CD14-positive monocyte (primary cell): ENCODE measurements at regions of chr11 and their contacts with region 1.

Region 1: DNA sequence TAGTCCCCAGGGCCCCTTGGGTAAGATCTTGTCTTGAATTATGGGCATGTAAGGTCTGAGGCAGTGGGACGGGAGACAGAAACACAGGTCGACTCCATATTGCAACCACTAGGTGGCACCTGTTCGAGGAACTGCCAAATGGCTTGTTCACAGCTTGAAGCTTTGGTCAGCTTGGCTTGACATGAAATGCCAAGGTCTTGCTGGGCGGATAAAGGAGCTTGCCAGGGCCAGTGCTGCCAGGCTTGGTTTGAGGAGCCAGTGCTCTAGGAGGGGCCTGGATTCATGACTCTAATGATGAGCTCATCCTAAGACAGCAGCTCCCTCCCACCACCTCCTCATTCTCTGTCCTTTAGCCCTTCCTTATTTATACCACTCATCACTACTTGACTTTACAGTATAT is 11.9 kb upstream of the NRIP3 start:
- DNase-seq: peak; percentile 67 to 82 (median 80)
- H3K4me3 ChIP-seq: no peak overlapping the region
- H3K4me3 Mint-ChIP-seq: no peak overlapping the region
- H3K27ac ChIP-seq: no peak overlapping the region
- H3K27ac Mint-ChIP-seq: peak overlapping the region in 1 of 7 donors; percentile 45
- H3K4me1 ChIP-seq: peaks cover 19 to 20% of the 10 kb centered on the region in 2 donors
- H3K4me1 Mint-ChIP-seq: peaks cover 23% of the 10 kb centered on the region
- H3K27me3 ChIP-seq: no peaks in the 10 kb centered on the region
- H3K27me3 Mint-ChIP-seq: peaks cover 3 to 6% (median 4%) of the 10 kb centered on the region in 3 donors
- CTCF ChIP-seq: peak; percentile 82

Region 2: DNA sequence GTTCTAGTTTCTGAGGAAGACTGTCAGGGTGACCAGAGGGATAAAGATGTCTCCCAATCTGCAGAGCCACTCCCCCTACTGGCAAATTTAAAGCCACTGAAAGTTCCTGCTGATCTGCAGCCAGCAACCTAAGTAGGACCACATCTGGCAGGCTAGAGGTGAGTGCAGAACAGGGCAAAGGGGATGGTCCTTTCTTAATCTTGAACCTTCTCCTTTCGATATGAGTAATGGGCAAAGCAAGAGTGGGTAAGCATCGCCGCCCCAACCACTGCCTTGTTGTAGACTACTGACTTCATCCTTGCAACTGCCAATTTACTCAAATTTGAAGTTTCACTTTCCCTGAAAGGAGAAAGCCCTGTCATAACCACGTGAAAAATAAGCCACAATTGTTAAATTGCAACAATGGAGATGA is 45.0 kb after region 1 on chr11:
- intact Hi-C with region 1: loop called in 1 of 2 experiments (anchors 10 kb)
- DNase-seq: peak; percentile 74 to 86 (median 80)
- H3K4me3 ChIP-seq: peak overlapping the region; percentile 16 to 56 (median 40)
- H3K4me3 Mint-ChIP-seq: peak overlapping the region; percentile 65 to 83
- H3K27ac ChIP-seq: peak overlapping the region; percentile 68 to 73
- H3K27ac Mint-ChIP-seq: peak overlapping the region; percentile 79 to 93 (median 89)
- H3K4me1 ChIP-seq: peaks cover 18 to 19% of the 10 kb centered on the region in 2 donors
- H3K4me1 Mint-ChIP-seq: peaks cover 31% of the 10 kb centered on the region
- H3K27me3 ChIP-seq: no peaks in the 10 kb centered on the region
- H3K27me3 Mint-ChIP-seq: peaks cover 0 to 2% (median 1%) of the 10 kb centered on the region in 3 donors
- CTCF ChIP-seq: peak; percentile 43

Region 3: GRCh38 chr11:9137293-9138132 is 121.8 kb after region 1 on chr11:
- intact Hi-C with region 1: loop called in 1 of 2 experiments (anchors 5 kb)
- DNase-seq: peak; percentile 39 to 69 (median 58)
- H3K4me3 ChIP-seq: no peak overlapping the region
- H3K4me3 Mint-ChIP-seq: no peak overlapping the region
- H3K27ac ChIP-seq: no peak overlapping the region
- H3K27ac Mint-ChIP-seq: peak overlapping the region in 3 of 7 donors; percentile 14 to 59 (median 43)
- H3K4me1 ChIP-seq: no peaks in the 10 kb centered on the region
- H3K4me1 Mint-ChIP-seq: peaks cover 6% of the 10 kb centered on the region
- H3K27me3 ChIP-seq: no peaks in the 10 kb centered on the region
- H3K27me3 Mint-ChIP-seq: no peaks in the 10 kb centered on the region
- CTCF ChIP-seq: peak; percentile 96